Gastrocnemius medialis (tissue), 4 donors: ENCODE measurements at regions of chrX and their contacts with region 1.

Region 1: GRCh38 chrX:135050603-135051002 is 1.3 kb downstream of the RTL8A start:
- DNase-seq: no peak
- ATAC-seq: no peak
- H3K4me3 ChIP-seq: peak overlapping the region in 2 of 4 donors; percentile 69 to 75
- H3K27ac ChIP-seq: peak overlapping the region; percentile 81 to 82 (median 82)
- H3K4me1 ChIP-seq: peaks cover 4 to 6% of the 10 kb centered on the region in 2 donors
- H3K27me3 ChIP-seq: no peaks in the 10 kb centered on the region
- CTCF ChIP-seq: no peak
- POLR2A ChIP-seq: no peak

Region 2: GRCh38 chrX:134676440-134677092 is 374.0 kb before region 1 on chrX:
- in situ Hi-C with region 1: no loop called
- intact Hi-C with region 1: no loop called
- DNase-seq: no peak
- ATAC-seq: no peak
- H3K4me3 ChIP-seq: no peak overlapping the region
- H3K27ac ChIP-seq: no peak overlapping the region
- H3K4me1 ChIP-seq: no peaks in the 10 kb centered on the region
- H3K27me3 ChIP-seq: no peaks in the 10 kb centered on the region
- CTCF ChIP-seq: no peak
- POLR2A ChIP-seq: no peak

Region 3: DNA sequence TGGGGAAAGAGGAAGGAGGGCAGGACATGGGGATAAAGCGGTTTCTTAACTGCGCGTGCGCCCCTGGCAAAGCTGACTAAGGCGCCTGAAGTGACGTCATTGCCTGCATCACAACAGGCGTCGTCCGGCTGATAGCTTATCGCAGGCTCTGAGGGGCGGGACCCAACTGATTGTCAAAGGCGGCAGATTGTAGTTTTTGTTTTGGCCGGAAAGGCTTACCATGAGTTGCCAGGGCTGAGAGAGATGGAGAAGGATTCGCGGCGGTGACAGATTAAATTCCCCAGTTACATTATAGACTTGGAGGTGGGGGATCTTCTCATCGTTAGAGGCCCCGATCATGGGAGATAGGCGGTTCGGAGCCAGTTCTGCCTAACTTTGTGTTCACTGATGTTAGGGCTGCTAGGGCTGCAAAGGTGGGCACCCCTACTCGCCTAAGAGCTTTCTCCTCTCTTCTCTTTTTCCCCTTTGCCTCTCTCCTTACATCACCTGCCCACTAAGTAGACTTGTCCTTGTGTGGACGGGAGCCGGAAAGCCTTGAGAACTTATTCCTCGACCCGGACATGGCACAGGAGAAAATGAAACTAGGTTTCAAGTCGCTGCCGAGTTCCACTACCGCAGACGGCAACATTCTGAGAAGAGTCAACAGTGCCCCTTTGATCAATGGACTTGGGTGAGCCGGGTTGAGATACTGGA is 243.4 kb before region 1 on chrX:
- in situ Hi-C with region 1: loop called in 1 of 4 experiments (anchors 25 kb)
- intact Hi-C with region 1: no loop called
- DNase-seq: peak; percentile 71 to 80
- ATAC-seq: peak; percentile 98 to 99
- H3K4me3 ChIP-seq: peak overlapping the region; percentile 56 to 70 (median 65)
- H3K27ac ChIP-seq: peak overlapping the region; percentile 78 to 87 (median 79)
- H3K4me1 ChIP-seq: no peaks in the 10 kb centered on the region
- H3K27me3 ChIP-seq: no peaks in the 10 kb centered on the region
- CTCF ChIP-seq: no peak
- POLR2A ChIP-seq: peak; percentile 38 to 66

Region 4: GRCh38 chrX:134969726-134970125 is 80.9 kb before region 1 on chrX:
- in situ Hi-C with region 1: no loop called
- intact Hi-C with region 1: no loop called
- DNase-seq: no peak
- ATAC-seq: no peak
- H3K4me3 ChIP-seq: no peak overlapping the region
- H3K27ac ChIP-seq: no peak overlapping the region
- H3K4me1 ChIP-seq: no peaks in the 10 kb centered on the region
- H3K27me3 ChIP-seq: no peaks in the 10 kb centered on the region
- CTCF ChIP-seq: no peak
- POLR2A ChIP-seq: no peak

Region 5: DNA sequence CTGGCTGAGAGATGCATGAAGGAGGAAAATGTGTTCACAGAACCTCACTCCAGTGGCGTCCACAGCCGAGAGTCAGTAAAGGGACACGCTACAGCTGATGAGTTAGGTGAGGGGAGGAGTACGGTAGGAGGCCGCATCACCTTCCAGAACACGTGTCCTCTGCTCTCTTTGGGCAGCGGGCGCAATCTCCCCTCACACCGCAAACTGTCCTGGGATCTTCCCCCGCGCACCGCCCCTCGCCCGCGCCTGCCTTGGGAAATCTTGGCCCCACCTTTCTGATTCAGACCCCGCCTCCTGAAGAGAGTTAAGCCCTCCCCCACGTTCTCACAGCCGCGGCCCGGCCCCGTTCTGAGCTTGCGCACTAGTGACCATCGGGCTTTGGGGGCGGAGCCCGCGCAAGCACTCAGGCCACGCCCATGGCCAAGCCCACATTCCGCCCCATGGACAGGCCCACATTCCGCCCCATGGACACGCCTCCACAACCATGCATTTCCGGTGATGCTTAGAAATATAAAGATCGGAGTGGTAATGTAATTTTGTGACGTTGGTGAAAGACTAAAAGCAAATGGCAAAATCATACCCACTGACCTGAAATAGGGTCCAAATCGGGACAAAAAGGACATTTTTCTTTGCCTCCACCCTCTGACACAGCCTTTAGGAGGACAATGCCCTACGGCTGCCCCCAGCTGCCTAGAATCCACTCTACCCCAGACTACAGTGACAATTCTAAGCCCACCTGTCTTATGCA is 46.6 kb before region 1 on chrX:
- in situ Hi-C with region 1: no loop called
- intact Hi-C with region 1: loop called (anchors 1 kb)
- DNase-seq: peak; percentile 66 to 84
- ATAC-seq: peak; percentile 96 to 98
- H3K4me3 ChIP-seq: peak overlapping the region; percentile 48 to 65 (median 54)
- H3K27ac ChIP-seq: peak overlapping the region; percentile 26 to 63 (median 55)
- H3K4me1 ChIP-seq: peaks cover 0 to 3% of the 10 kb centered on the region in 2 donors
- H3K27me3 ChIP-seq: no peaks in the 10 kb centered on the region
- CTCF ChIP-seq: no peak
- POLR2A ChIP-seq: no peak

Region 6: DNA sequence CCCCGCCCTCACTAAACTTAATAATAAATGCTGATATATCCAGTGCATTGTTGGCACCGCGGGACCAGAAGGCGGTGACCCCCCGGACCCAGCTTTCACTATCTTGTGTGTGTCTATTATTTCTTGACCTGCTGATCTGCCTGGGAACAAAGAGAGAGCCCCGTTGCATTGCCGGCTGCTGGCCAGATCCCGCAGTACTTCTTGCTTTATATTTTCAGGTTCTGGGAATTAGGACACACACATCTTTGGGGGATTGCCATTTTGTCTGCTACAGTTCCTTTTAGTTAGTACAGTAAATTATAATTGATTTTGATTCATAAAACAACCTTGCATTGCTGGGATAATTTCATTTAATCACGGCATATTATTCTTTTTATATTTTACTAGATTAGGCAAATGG is 26.1 kb before region 1 on chrX:
- in situ Hi-C with region 1: no loop called
- intact Hi-C with region 1: no loop called
- DNase-seq: no peak
- ATAC-seq: no peak
- H3K4me3 ChIP-seq: no peak overlapping the region
- H3K27ac ChIP-seq: no peak overlapping the region
- H3K4me1 ChIP-seq: peaks cover 3 to 11% of the 10 kb centered on the region in 2 donors
- H3K27me3 ChIP-seq: no peaks in the 10 kb centered on the region
- CTCF ChIP-seq: no peak
- POLR2A ChIP-seq: no peak

Region 7: DNA sequence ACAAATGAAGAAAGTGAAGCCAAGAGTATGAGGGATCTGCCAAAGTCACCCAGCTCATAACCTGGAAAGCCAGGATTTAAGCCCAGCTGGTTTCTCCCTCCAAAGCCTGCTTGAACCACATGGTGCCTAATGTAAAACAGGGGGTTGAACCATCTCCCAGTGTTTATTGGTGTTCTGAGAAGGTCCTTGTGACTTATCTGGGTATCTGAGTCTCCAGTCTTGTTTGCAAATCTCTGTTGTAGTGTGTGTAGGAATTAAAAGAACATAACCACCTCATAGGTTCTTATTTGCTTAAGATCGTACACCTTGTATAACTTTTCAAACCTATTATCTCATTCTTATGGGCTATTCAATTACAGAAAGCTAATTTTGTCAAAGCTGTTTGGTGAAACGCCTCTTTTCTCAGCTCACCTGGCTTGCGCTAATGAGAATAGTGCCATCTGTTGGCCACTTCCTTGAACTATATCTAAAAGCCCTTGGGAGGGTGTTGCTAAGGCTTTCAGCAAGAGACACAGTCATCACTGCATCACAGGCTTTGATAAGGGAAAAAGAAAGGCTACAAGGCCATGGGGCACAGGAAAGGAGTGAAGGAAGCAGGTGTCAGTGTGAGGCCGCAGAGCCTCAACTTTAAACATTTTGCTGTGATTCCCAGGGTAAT is 35.7 kb after region 1 on chrX:
- in situ Hi-C with region 1: no loop called
- intact Hi-C with region 1: loop called (anchors 2 kb)
- DNase-seq: no peak
- ATAC-seq: peak; percentile 62 to 86
- H3K4me3 ChIP-seq: no peak overlapping the region
- H3K27ac ChIP-seq: no peak overlapping the region
- H3K4me1 ChIP-seq: no peaks in the 10 kb centered on the region
- H3K27me3 ChIP-seq: no peaks in the 10 kb centered on the region
- CTCF ChIP-seq: peak in 4 of 5 experiments; percentile 38 to 57 (median 46)
- POLR2A ChIP-seq: no peak